ENCODE measurements at regions of chr12 and their contacts with region 1.

Region 1: GRCh38 chr12:6825398-6826124 is 2.6 kb upstream of the P3H3 start:
- DNase-seq: peak; percentile 92
- H3K4me3 ChIP-seq: peak overlapping the region in 1 of 2 experiments; percentile 50; a peak in 2 of 4 replicates
- H3K27ac ChIP-seq: peak overlapping the region in 1 of 2 experiments; percentile 35; a peak in 1 of 4 replicates
- H3K4me1 ChIP-seq: peaks cover 23 to 60% of the 10 kb centered on the region in 2 experiments; a peak in 3 of 4 replicates
- H3K27me3 ChIP-seq: no peaks in the 10 kb centered on the region
- CTCF ChIP-seq: peak; percentile 88
- EP300 ChIP-seq: no peak; a peak in 1 of 4 replicates
- RAD21 ChIP-seq: peak; percentile 94

Region 2: DNA sequence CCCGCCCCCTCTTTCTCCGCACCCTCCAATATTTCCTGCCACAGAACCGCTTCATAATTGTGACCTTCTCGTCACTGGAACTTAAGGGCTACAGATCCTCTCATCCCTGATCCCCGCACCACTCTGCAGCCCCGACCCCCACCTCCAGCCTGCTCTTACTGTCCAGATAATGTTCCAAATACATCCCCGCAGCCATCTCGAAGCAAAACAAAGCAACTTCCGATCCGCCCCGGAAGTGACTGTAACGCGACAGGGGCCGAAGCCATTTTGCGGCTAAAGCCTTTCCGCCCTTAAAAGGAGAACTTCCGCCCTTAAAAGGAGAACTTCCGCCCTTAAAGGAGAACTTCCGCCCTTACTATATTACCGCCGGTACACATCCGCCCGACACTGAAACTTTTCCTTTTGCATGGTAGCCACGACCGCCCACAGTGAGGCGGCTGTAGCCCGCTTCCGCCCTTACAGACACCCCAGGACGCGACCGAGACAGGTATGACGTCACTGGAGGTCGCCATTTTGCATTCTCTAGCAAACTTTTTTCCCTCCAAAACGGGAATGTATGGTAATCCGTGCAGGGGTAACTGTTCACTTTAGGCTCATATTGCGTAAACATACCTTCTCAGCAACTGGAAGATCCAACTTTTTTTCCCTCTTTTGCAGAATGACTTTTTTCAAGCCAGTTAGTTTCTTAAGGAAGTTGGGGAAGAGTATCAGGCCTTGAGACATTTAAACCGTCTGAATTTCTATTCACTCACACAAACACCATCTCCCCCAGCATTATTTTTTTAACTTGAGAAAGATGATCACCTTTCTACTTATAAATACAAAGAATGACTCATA is 162.4 kb before region 1 on chr12 and contains the start of gene ING4:
- CTCF ChIA-PET with region 1: no interaction called
- POLR2A ChIA-PET with region 1: no interaction called
- DNase-seq: peak; percentile 93
- H3K4me3 ChIP-seq: peak within 1 kb of the TSS; percentile 74 to 93
- H3K27ac ChIP-seq: peak within 1 kb of the TSS; percentile 73 to 79
- H3K4me1 ChIP-seq: peaks cover 4% of the 10 kb centered on the region in 2 experiments; a peak in 3 of 4 replicates
- H3K27me3 ChIP-seq: no peaks in the 10 kb centered on the region
- CTCF ChIP-seq: no peak
- EP300 ChIP-seq: no peak; a peak in 1 of 4 replicates
- RAD21 ChIP-seq: no peak
- polyA plus RNA-seq, gene ING4: 96.5 and 163 TPM in 2 replicates

Region 3: DNA sequence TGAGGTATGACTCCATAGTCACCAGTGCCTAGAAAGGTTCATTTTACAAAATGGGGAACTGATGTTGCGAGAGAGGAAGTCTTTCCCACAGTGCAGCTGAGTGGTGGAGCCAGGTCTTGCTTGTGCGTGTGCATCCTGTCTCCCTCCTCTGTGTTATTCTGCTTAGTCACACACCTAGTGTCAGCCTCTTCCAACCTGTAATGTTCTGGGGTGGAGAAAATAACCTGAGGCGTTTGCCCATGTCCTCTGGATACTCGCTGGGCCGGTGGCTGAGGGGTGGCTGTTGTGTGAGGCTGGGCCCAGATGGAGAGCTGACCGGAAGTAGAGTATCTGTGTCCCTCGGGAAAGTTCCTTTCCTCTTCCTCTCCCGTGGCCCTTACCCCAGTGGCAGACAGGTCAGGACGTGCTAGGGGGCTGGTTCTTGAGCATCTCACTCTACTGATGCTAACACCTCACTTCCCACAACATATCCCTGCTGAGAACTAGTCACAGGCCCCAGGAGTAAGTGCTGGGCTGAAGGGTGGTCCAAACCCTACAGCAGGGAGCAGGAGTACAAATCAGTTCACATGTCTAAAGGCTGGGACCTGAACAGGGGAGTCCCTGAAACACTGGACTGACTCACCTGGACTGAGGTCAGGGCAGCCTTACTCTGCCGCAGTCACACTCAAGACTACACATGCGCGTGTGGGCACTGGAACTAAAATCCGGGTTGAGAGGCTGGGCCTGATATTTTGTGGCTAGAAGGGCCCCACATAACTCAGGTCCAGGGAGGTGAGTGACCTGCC is 79.6 kb before region 1 on chr12:
- CTCF ChIA-PET with region 1: interaction called, 246 read pairs
- POLR2A ChIA-PET with region 1: no interaction called
- DNase-seq: no peak
- H3K4me3 ChIP-seq: no peak overlapping the region
- H3K27ac ChIP-seq: no peak overlapping the region
- H3K4me1 ChIP-seq: no peaks in the 10 kb centered on the region; a peak in 2 of 4 replicates
- H3K27me3 ChIP-seq: no peaks in the 10 kb centered on the region
- CTCF ChIP-seq: no peak
- EP300 ChIP-seq: no peak
- RAD21 ChIP-seq: no peak

Region 4: GRCh38 chr12:6764011-6764828 is 61.3 kb before region 1 on chr12:
- CTCF ChIA-PET with region 1: interaction called, 40 read pairs
- POLR2A ChIA-PET with region 1: interaction called, 19 read pairs
- DNase-seq: peak; percentile 88
- H3K4me3 ChIP-seq: peak overlapping the region; percentile 26 to 47
- H3K27ac ChIP-seq: peak overlapping the region; percentile 87 to 99
- H3K4me1 ChIP-seq: peaks cover 20 to 37% of the 10 kb centered on the region in 2 experiments
- H3K27me3 ChIP-seq: no peaks in the 10 kb centered on the region
- CTCF ChIP-seq: no peak
- EP300 ChIP-seq: peak; percentile 50 to 83; a peak in 3 of 4 replicates
- RAD21 ChIP-seq: no peak

Region 5: GRCh38 chr12:6778574-6779550 is 46.7 kb before region 1 on chr12:
- CTCF ChIA-PET with region 1: interaction called, 74 read pairs
- POLR2A ChIA-PET with region 1: interaction called, 4 read pairs
- DNase-seq: peak; percentile 94
- H3K4me3 ChIP-seq: peak overlapping the region; percentile 10 to 59; a peak in 3 of 4 replicates
- H3K27ac ChIP-seq: peak overlapping the region; percentile 18 to 52; a peak in 3 of 4 replicates
- H3K4me1 ChIP-seq: peaks cover 0 to 8% of the 10 kb centered on the region in 2 experiments; a peak in 1 of 4 replicates
- H3K27me3 ChIP-seq: no peaks in the 10 kb centered on the region
- CTCF ChIP-seq: peak; percentile 91
- EP300 ChIP-seq: peak in 1 of 2 experiments; percentile 45; a peak in 1 of 4 replicates
- RAD21 ChIP-seq: peak; percentile 99

Region 6: DNA sequence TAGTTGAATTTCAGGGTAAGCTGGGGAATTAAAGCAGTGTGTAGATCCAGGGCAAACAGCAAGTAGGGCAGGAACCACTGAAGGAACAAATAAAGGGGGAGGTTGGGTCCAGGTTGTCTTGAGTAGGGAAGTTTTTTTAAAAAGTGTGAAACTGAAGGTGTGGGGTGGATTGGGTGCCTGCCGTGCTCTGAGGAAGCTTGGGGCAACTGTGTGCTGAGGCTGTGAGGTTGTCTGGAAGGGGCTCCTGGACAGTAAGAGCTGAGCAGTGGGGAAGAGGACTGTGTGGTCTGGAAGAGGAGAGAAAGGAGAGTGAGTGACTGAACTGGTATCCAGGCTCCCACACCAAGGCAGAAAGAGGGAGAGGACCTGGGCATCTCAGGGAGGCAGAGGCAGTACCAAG is 14.8 kb before region 1 on chr12:
- CTCF ChIA-PET with region 1: interaction called, 15 read pairs
- POLR2A ChIA-PET with region 1: interaction called, 3 read pairs
- DNase-seq: no peak
- H3K4me3 ChIP-seq: no peak overlapping the region
- H3K27ac ChIP-seq: no peak overlapping the region
- H3K4me1 ChIP-seq: peaks cover 0 to 1% of the 10 kb centered on the region in 2 experiments; a peak in 1 of 4 replicates
- H3K27me3 ChIP-seq: no peaks in the 10 kb centered on the region
- CTCF ChIP-seq: no peak
- EP300 ChIP-seq: no peak
- RAD21 ChIP-seq: no peak

Measured in SK-N-SH (cell line).